MCF 10A (cell line): ENCODE measurements at regions of chr5 and their contacts with region 1.

Region 1: DNA sequence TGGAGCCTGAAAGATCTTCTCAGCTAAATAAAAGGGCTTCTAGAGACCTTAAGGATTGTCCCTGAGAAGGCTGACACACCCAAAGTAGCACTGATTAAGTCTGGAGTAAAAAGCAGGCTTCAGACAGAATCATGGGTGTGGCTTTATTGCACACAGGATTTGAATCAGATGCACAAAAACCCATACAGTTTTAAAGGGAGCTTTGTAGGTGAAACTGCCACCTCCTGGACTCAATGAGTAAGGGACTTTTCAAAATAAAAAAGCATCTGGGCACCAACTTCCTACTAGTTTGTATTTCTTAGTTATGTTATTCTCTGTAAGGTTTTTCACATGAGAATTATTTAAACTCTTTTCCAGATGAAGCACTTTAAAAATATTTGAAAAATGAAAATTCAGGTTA is 129.4 kb downstream of the EDIL3 start:
- DNase-seq: peak; percentile 33
- H3K4me3 Mint-ChIP-seq: no peak overlapping the region
- H3K27ac Mint-ChIP-seq: no peak overlapping the region
- H3K4me1 Mint-ChIP-seq: no peaks in the 10 kb centered on the region
- H3K27me3 Mint-ChIP-seq: peaks cover 62% of the 10 kb centered on the region
- CTCF ChIP-seq: peak; percentile 20

Region 2: DNA sequence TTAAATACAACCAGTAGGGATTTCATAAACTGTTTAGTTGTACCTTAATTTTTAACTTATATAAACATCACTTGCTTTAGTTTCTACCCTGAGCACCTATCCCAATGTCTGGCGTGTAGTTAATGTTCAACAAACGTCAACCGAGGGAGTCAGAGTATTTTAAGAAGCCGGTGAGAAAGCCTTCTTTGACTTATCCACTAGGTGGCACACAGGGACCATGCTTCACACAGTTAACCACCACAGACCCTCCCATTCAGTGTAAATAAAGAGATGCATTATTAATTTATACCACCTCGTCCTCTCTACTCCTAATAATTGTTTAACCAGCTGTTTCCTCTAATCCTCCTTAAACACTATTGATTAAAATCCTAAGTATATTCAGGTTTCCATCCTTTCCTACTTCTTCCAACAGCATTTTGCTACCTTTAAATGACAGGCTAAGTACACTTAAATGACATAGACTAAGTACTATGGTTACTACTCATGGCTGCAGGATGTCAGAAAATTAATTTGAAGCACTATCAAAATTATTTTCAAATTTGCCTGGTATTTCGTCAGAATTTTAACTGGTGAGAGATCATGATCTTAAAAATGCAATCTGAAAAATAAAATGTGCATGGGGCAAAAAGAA is 537.0 kb before region 1 on chr5:
- CTCF ChIA-PET with region 1: interaction called, 5 read pairs
- POLR2A ChIA-PET with region 1: no interaction called
- intact Hi-C with region 1: loop called (anchors 1 kb)
- DNase-seq: peak; percentile 67
- H3K4me3 Mint-ChIP-seq: no peak overlapping the region
- H3K27ac Mint-ChIP-seq: no peak overlapping the region
- H3K4me1 Mint-ChIP-seq: peaks cover 5% of the 10 kb centered on the region
- H3K27me3 Mint-ChIP-seq: peaks cover 99% of the 10 kb centered on the region
- CTCF ChIP-seq: peak; percentile 82

Region 3: DNA sequence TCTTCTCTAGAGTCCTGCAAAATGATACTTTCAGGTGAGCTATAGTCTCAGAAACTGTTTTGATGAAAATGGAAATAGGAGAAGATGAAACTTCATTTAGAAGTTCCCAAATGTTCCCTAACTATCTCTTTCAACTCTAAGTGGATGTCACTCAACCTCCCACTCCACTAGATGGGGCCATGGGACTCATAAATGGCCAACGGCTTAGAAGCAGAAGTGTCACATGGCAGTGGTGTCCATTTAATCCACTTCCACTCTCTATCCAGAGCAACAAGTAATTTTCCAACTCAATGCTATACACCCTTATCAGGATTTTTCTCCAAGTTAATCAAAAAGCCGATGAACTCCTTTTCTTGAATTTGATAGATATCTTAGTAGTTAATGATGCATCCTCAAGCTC is 166.3 kb before region 1 on chr5:
- CTCF ChIA-PET with region 1: interaction called, 3 read pairs
- POLR2A ChIA-PET with region 1: no interaction called
- intact Hi-C with region 1: loop called (anchors 1 kb)
- DNase-seq: peak; percentile 24
- H3K4me3 Mint-ChIP-seq: no peak overlapping the region
- H3K27ac Mint-ChIP-seq: no peak overlapping the region
- H3K4me1 Mint-ChIP-seq: no peaks in the 10 kb centered on the region
- H3K27me3 Mint-ChIP-seq: peaks cover 70% of the 10 kb centered on the region
- CTCF ChIP-seq: peak; percentile 12

Region 4: GRCh38 chr5:84327591-84327990 is 72.3 kb after region 1 on chr5:
- CTCF ChIA-PET with region 1: no interaction called
- POLR2A ChIA-PET with region 1: no interaction called
- intact Hi-C with region 1: no loop called
- DNase-seq: peak; percentile 19
- H3K4me3 Mint-ChIP-seq: no peak overlapping the region
- H3K27ac Mint-ChIP-seq: no peak overlapping the region
- H3K4me1 Mint-ChIP-seq: no peaks in the 10 kb centered on the region
- H3K27me3 Mint-ChIP-seq: peaks cover 88% of the 10 kb centered on the region
- CTCF ChIP-seq: no peak

Region 5: GRCh38 chr5:84506625-84507024 is 251.3 kb after region 1 on chr5:
- CTCF ChIA-PET with region 1: no interaction called
- POLR2A ChIA-PET with region 1: no interaction called
- intact Hi-C with region 1: no loop called
- DNase-seq: no peak
- H3K4me3 Mint-ChIP-seq: no peak overlapping the region
- H3K27ac Mint-ChIP-seq: no peak overlapping the region
- H3K4me1 Mint-ChIP-seq: no peaks in the 10 kb centered on the region
- H3K27me3 Mint-ChIP-seq: peaks cover 62% of the 10 kb centered on the region
- CTCF ChIP-seq: no peak

Region 6: GRCh38 chr5:84791138-84791537 is 535.8 kb after region 1 on chr5:
- CTCF ChIA-PET with region 1: no interaction called
- POLR2A ChIA-PET with region 1: no interaction called
- intact Hi-C with region 1: no loop called
- DNase-seq: no peak
- H3K4me3 Mint-ChIP-seq: no peak overlapping the region
- H3K27ac Mint-ChIP-seq: no peak overlapping the region
- H3K4me1 Mint-ChIP-seq: no peaks in the 10 kb centered on the region
- H3K27me3 Mint-ChIP-seq: peaks cover 29% of the 10 kb centered on the region
- CTCF ChIP-seq: no peak